A549 (cell line): ENCODE measurements at regions of chr9 and their contacts with region 1.

Region 1: DNA sequence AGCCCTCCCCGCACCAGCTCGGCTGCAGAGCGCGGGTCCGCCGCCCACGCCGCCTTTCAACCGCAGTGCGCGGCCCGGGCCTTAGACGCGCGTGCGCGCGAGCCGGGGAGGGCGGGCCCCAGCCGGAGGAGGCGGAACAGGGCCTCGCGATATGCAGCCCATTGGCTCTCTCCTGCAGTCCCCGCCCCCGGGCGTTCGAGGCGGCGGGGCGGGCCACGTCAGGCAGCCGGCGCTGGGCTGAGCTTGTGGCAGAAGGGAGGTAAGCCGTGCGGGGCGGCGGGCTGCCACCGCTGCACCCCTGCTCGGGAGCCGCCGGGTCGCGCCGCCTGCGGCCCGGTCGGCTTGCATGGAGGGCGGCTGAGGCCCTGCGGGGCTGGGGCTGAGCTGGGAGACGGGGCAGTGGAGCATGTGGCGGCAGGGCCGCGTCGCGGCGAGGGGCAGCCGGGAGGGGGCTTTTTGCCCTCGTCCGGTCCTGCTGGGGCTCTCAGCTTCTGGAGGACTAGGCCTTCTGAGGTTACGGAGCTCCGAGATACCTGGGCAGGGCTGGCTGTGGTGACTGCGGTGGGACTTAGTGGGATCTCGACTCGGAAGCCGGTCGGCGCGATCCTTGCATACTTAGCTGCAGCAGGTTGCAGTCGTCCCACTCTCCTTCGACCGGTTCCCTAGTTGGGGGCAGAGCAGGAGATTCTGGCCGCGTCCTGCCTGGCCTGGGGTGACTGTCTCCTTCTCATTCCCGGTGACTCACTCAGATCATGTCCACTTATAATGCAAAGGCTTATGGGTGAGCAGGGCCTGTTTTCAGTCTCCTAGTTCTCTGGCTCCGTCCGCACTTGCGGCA is at the start of gene FOCAD:
- DNase-seq: peak; percentile 89 to 94
- ATAC-seq: peak; percentile 95 to 99
- H3K4me3 ChIP-seq: peak within 1 kb of the TSS; percentile 89
- H3K27ac ChIP-seq: peak within 1 kb of the TSS; percentile 93 to 97
- H3K4me1 ChIP-seq: peaks cover 22% of the 10 kb centered on the region
- CTCF ChIP-seq: no peak
- EP300 ChIP-seq: no peak
- POLR2A ChIP-seq: peak; percentile 96
- RAD21 ChIP-seq: no peak; a peak in 1 of 5 replicates
- polyA plus RNA-seq, gene FOCAD: 53.8 and 71.7 TPM in 2 replicates

Region 2: GRCh38 chr9:20658677-20659473 is 25.4 kb before region 1 on chr9:
- CTCF ChIA-PET with region 1: no interaction called
- POLR2A ChIA-PET with region 1: interaction called, 14 read pairs
- DNase-seq: peak; percentile 9 to 31
- ATAC-seq: peak; percentile 74 to 90
- H3K4me3 ChIP-seq: peak overlapping the region; percentile 87
- H3K27ac ChIP-seq: peak overlapping the region; percentile 86 to 91
- H3K4me1 ChIP-seq: peaks cover 19% of the 10 kb centered on the region; the same call in 1 of the 3 replicates
- CTCF ChIP-seq: no peak
- EP300 ChIP-seq: no peak
- POLR2A ChIP-seq: no peak
- RAD21 ChIP-seq: no peak

Region 3: GRCh38 chr9:20671635-20672034 is 12.6 kb before region 1 on chr9:
- CTCF ChIA-PET with region 1: interaction called, 4 read pairs
- POLR2A ChIA-PET with region 1: interaction called, 10 read pairs
- DNase-seq: no peak
- ATAC-seq: no peak
- H3K4me3 ChIP-seq: no peak overlapping the region
- H3K27ac ChIP-seq: no peak overlapping the region
- H3K4me1 ChIP-seq: no peaks in the 10 kb centered on the region
- CTCF ChIP-seq: no peak
- EP300 ChIP-seq: no peak
- POLR2A ChIP-seq: no peak
- RAD21 ChIP-seq: no peak

Region 4: GRCh38 chr9:20701060-20701459 is 16.8 kb after region 1 on chr9:
- CTCF ChIA-PET with region 1: interaction called, 5 read pairs
- POLR2A ChIA-PET with region 1: interaction called, 15 read pairs
- DNase-seq: no peak
- ATAC-seq: no peak
- H3K4me3 ChIP-seq: no peak overlapping the region
- H3K27ac ChIP-seq: no peak overlapping the region
- H3K4me1 ChIP-seq: peaks cover 9% of the 10 kb centered on the region; the same call in 2 of the 3 replicates
- CTCF ChIP-seq: no peak
- EP300 ChIP-seq: no peak
- POLR2A ChIP-seq: no peak
- RAD21 ChIP-seq: no peak

Region 5: DNA sequence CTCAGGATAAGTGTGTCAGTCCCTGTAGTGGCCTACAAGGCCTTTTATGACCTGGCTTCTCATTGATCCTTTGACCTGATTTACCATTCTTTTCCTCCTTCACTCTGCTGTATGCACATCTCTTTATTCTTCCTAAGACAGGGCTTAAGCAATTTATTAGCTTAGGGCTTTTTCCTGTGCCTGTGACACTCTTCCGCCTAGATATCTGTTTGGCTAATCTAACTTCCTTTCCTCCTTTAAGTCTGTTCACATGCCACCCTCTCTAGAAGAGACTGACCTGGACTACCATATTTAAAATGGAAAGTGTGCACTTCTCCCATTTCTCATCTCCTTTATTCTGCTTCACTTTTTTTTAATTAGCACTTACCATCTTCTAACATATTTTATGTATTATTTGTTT is 28.9 kb after region 1 on chr9:
- CTCF ChIA-PET with region 1: no interaction called
- POLR2A ChIA-PET with region 1: no interaction called
- DNase-seq: no peak
- ATAC-seq: no peak
- H3K4me3 ChIP-seq: no peak overlapping the region
- H3K27ac ChIP-seq: no peak overlapping the region
- H3K4me1 ChIP-seq: no peaks in the 10 kb centered on the region
- CTCF ChIP-seq: no peak
- EP300 ChIP-seq: no peak
- POLR2A ChIP-seq: no peak
- RAD21 ChIP-seq: no peak

Region 6: DNA sequence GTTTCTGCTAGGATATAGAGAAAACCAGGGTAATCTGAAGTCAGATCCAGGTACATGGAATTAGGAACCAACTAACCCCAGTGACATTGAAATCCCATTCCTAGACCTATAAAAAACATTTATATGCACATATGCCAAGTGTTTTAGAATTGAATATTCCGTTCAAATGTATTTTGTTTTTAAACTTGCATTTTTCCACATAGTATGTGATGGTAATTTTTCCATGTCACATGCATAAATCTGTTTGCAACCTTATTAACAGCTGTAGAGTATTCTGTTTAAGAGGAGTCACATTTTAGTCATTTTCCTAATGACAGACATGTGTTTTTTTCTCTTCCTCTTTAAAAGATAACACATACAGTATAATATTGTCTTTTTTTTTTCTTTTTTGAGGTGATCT is 50.0 kb after region 1 on chr9:
- CTCF ChIA-PET with region 1: no interaction called
- POLR2A ChIA-PET with region 1: no interaction called
- DNase-seq: no peak
- ATAC-seq: no peak
- H3K4me3 ChIP-seq: no peak overlapping the region
- H3K27ac ChIP-seq: no peak overlapping the region
- H3K4me1 ChIP-seq: peaks cover 29% of the 10 kb centered on the region
- CTCF ChIP-seq: no peak
- EP300 ChIP-seq: no peak
- POLR2A ChIP-seq: no peak
- RAD21 ChIP-seq: no peak

Region 7: GRCh38 chr9:20862420-20862819 is 178.2 kb after region 1 on chr9:
- CTCF ChIA-PET with region 1: no interaction called
- POLR2A ChIA-PET with region 1: no interaction called
- DNase-seq: no peak
- ATAC-seq: no peak
- H3K4me3 ChIP-seq: no peak overlapping the region
- H3K27ac ChIP-seq: no peak overlapping the region
- H3K4me1 ChIP-seq: no peaks in the 10 kb centered on the region
- CTCF ChIP-seq: no peak
- EP300 ChIP-seq: no peak
- POLR2A ChIP-seq: no peak
- RAD21 ChIP-seq: no peak